Psoas muscle (tissue), 8 donors: ENCODE measurements at regions of chr9 and their contacts with region 1.

Region 1: GRCh38 chr9:128034821-128035764 is 32.0 kb downstream of the NAIF1 start:
- DNase-seq: peak; percentile 55 to 75
- ATAC-seq: peak; percentile 92 to 99 (median 96)
- H3K4me3 ChIP-seq: no peak overlapping the region
- H3K27ac ChIP-seq: no peak overlapping the region
- H3K4me1 ChIP-seq: peaks cover 3% of the 10 kb centered on the region
- H3K27me3 ChIP-seq: no peaks in the 10 kb centered on the region
- CTCF ChIP-seq: peak; percentile 92

Region 2: GRCh38 chr9:127943731-127944144 is 91.4 kb before region 1 on chr9:
- intact Hi-C with region 1: loop called (anchors 1 to 2 kb)
- DNase-seq: peak; percentile 85 to 91
- ATAC-seq: peak; percentile 75 to 85 (median 78)
- H3K4me3 ChIP-seq: no peak overlapping the region
- H3K27ac ChIP-seq: no peak overlapping the region
- H3K4me1 ChIP-seq: peaks cover 2% of the 10 kb centered on the region
- H3K27me3 ChIP-seq: no peaks in the 10 kb centered on the region
- CTCF ChIP-seq: peak; percentile 75

Region 3: GRCh38 chr9:127979333-127980110 is 55.6 kb before region 1 on chr9:
- intact Hi-C with region 1: loop called in 1 of 2 experiments (anchors 5 kb)
- DNase-seq: peak; percentile 58 to 78
- ATAC-seq: peak in 3 of 4 donors; percentile 9 to 22 (median 9)
- H3K4me3 ChIP-seq: peak overlapping the region; percentile 85
- H3K27ac ChIP-seq: peak overlapping the region; percentile 80
- H3K4me1 ChIP-seq: peaks cover 65% of the 10 kb centered on the region
- H3K27me3 ChIP-seq: no peaks in the 10 kb centered on the region
- CTCF ChIP-seq: no peak

Region 4: DNA sequence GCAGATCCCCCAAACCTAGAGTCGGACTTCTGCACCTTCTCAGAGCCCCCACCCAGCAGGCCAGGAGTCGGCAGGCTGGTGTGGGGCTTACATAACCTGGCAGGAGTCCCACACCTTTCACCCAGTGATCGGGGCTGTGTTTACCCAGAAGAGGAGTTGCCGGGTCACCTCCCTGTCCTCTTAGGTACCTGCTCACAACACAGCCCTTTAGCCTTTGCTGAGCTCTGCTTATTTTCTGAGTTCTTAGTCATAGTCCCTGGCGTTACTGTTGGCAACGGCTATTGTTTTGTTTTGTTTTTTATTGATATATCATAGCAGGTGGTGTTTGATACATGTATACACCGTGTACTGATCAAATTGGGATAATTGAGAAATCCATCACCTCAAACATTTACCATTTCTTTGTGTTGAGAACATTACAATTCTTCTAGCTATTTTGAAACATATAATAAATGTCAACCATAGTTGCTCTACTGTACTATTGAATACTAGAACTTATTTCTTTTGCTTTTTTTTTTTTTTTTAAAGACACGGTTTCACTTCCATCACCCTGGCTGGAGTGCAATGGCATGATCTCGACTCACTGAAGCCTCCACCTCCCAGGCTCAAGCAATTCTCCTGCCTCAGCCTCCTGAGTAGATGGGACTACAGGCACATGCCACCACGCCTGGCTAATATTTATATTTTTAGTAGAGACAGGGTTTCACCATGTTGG is 43.9 kb before region 1 on chr9:
- intact Hi-C with region 1: no loop called
- DNase-seq: no peak
- ATAC-seq: no peak
- H3K4me3 ChIP-seq: no peak overlapping the region
- H3K27ac ChIP-seq: no peak overlapping the region
- H3K4me1 ChIP-seq: peaks cover 13% of the 10 kb centered on the region
- H3K27me3 ChIP-seq: no peaks in the 10 kb centered on the region
- CTCF ChIP-seq: no peak